ENCODE measurements at regions of chr1 and their contacts with region 1.

Region 1: DNA sequence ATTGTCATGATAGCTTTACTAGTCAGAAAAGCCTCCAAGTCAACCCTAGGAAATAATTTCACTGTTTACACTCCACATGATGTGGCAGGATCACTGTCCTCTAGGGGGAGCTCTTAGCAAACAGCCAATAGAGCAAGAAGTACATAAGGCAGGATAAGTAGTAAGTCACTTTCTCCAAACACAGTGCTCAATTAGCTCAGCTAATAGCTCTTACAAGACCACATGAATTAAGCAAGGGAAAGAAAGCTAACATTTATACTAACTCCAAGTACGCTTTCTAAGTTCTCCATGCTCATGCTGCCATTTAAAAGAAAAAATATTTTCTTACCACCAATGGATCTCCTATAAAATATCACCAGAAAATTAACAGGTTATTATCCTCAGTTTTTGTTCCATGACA is 66.9 kb upstream of the LRIF1 start:
- DNase-seq: peak; percentile 24
- H3K4me3 ChIP-seq: peak overlapping the region in 1 of 2 experiments; percentile 18; a peak in 1 of 4 replicates
- H3K27ac ChIP-seq: no peak overlapping the region
- H3K4me1 ChIP-seq: no peaks in the 10 kb centered on the region
- H3K27me3 ChIP-seq: peaks cover under 1% of the 10 kb centered on the region; the same call in 1 of the 2 replicates
- CTCF ChIP-seq: peak; percentile 81
- EP300 ChIP-seq: no peak
- RAD21 ChIP-seq: peak; percentile 52

Region 2: DNA sequence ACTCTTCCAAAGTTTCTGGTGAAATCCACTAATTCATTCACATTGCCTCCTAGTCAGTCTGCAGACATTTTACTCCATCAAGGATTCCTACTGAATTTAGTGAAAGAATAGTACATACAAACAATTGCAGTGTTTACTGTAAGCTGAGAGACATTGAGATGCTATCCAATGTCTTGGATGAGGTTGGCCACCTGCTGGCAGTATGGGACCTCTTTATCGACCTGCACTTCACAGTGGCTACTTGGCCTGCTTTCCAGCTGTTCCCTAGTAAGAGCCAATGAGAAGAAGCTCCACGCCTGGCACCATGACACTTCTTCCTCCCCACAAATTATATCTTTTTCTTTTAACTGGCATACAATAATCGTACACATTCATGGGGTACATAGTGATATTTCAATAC is 15.4 kb before region 1 on chr1:
- CTCF ChIA-PET with region 1: interaction called, 48 read pairs
- POLR2A ChIA-PET with region 1: no interaction called
- DNase-seq: no peak
- H3K4me3 ChIP-seq: no peak overlapping the region
- H3K27ac ChIP-seq: no peak overlapping the region
- H3K4me1 ChIP-seq: no peaks in the 10 kb centered on the region
- H3K27me3 ChIP-seq: no peaks in the 10 kb centered on the region; the same call in 1 of the 2 replicates
- CTCF ChIP-seq: no peak
- EP300 ChIP-seq: no peak
- RAD21 ChIP-seq: no peak

Region 3: GRCh38 chr1:111045033-111045722 is 14.6 kb after region 1 on chr1:
- CTCF ChIA-PET with region 1: interaction called, 28 read pairs
- POLR2A ChIA-PET with region 1: no interaction called
- DNase-seq: no peak
- H3K4me3 ChIP-seq: no peak overlapping the region
- H3K27ac ChIP-seq: no peak overlapping the region
- H3K4me1 ChIP-seq: no peaks in the 10 kb centered on the region
- H3K27me3 ChIP-seq: no peaks in the 10 kb centered on the region
- CTCF ChIP-seq: no peak
- EP300 ChIP-seq: no peak
- RAD21 ChIP-seq: no peak